ENCODE measurements at regions of chr4 and their contacts with region 1.

Region 1: DNA sequence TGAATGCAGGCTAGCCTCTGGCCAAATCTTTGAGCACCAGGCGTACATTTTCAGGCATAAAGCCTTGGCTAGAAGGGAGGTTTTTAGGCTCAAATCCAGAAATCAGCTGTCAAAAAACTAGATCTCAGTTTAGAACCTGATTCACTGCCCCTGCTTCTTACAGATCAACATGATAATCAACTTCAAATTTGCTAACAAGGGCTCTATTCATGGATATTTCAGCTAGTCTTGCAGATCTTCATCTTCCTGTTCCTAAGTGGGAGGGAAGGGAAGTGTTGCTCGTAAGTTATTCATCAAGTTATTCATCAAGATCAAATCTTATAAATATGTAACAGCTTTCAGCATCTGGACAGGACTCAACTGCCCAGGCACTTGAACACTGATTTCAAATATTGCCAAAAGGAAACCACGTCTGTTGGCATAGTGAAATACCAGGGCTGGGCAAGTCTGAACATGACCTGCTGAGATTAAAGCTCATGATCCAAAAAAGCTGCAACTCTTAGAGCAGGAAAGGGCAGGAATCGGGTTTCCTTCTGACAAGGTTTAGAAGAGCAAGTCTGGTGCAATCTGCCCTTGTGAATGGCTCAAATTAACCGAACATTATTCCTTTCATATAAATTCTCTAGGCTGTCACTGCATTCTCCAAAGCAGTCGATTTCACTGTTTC is 200.3 kb downstream of the PDGFC start:
- DNase-seq: no peak
- ATAC-seq: peak; percentile 38; the same call in 2 of the 3 replicates
- H3K4me3 ChIP-seq: no peak overlapping the region; the same call in 1 of the 2 replicates
- H3K27ac ChIP-seq: no peak overlapping the region
- H3K4me1 ChIP-seq: no peaks in the 10 kb centered on the region
- H3K27me3 ChIP-seq: no peaks in the 10 kb centered on the region
- CTCF ChIP-seq: no peak
- EP300 ChIP-seq: no peak
- POLR2A ChIP-seq: no peak
- RAD21 ChIP-seq: no peak

Region 2: GRCh38 chr4:156790866-156791265 is 19.6 kb after region 1 on chr4:
- CTCF ChIA-PET with region 1: interaction called, 7 read pairs
- POLR2A ChIA-PET with region 1: interaction called, 4 read pairs
- RAD21 ChIA-PET with region 1: interaction called, 8 read pairs
- SMC1A ChIA-PET with region 1: interaction called, 15 read pairs
- in situ Hi-C with region 1: no loop called
- intact Hi-C with region 1: no loop called
- DNase-seq: no peak
- ATAC-seq: no peak
- H3K4me3 ChIP-seq: no peak overlapping the region
- H3K27ac ChIP-seq: no peak overlapping the region
- H3K4me1 ChIP-seq: no peaks in the 10 kb centered on the region
- H3K27me3 ChIP-seq: no peaks in the 10 kb centered on the region
- CTCF ChIP-seq: no peak
- EP300 ChIP-seq: no peak
- POLR2A ChIP-seq: no peak
- RAD21 ChIP-seq: no peak

Region 3: DNA sequence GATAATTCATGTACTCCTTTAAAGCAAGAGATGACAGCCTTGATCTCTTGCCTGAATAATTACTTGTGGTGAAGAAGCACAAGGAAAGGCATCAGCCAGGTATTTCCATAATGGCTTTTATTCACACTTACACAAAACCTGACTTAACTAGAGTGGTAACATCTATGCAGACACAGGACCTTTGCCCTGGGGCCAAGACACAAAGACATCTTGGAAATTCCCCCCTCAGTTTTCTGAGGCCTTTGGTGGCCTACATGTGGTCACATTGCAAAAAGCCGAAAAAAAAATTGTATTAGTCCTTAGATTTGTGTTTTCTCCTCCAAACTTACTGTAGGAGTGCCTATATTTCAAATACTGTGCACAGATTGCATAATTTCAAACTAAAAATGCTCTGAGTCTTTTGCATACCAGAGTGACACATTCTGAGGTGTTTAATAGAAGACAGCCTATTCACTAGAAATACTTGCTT is 27.9 kb after region 1 on chr4:
- CTCF ChIA-PET with region 1: interaction called, 9 read pairs
- POLR2A ChIA-PET with region 1: interaction called, 3 read pairs
- RAD21 ChIA-PET with region 1: interaction called, 8 read pairs
- SMC1A ChIA-PET with region 1: interaction called, 15 read pairs
- in situ Hi-C with region 1: no loop called
- intact Hi-C with region 1: no loop called
- DNase-seq: no peak
- ATAC-seq: peak; percentile 79
- H3K4me3 ChIP-seq: no peak overlapping the region
- H3K27ac ChIP-seq: no peak overlapping the region
- H3K4me1 ChIP-seq: no peaks in the 10 kb centered on the region
- H3K27me3 ChIP-seq: no peaks in the 10 kb centered on the region
- CTCF ChIP-seq: no peak
- EP300 ChIP-seq: no peak
- POLR2A ChIP-seq: no peak
- RAD21 ChIP-seq: no peak